HAP-1 (cell line): ENCODE measurements at regions of chr2 and their contacts with region 1.

Region 1: DNA sequence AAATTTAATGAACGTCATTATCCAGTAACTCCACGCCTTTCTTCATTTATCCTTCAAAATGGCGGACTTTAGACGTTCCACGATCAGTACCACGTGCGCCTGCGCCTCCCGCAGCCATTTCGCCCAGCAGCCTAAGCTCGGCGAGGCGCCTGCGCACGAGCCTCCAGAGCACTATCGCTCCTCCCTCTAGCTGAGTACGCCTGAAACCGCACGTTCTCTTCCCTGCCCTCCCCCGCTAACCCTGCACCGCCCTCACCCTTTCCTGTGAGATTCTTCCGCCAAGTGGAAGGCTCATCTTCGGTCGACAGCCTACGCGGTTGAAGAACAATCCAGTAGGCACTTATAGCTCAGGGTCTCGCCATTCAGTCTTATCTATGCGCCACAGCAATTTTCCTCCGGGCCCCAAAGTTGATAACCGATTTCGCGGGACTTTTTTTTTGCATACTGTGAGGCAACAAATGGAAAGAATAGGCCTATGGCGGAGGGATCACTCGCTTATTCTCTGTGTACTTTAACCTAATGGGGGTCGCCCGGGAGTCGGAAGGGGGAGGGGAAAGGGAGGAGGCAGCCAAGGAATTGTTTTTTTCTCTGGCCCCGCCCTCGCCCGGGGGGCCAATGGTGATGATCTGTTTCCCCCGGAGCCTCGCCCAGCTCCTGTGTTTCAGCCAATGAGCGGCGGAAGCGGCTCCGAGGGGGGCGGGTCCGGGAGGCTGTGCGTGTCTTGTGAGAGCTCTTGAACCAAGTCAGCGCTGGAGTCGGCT is at the start of gene KDM3A:
- DNase-seq: peak; percentile 97 to 100
- H3K4me3 ChIP-seq: peak within 1 kb of the TSS; percentile 45
- H3K4me1 ChIP-seq: peaks cover 8% of the 10 kb centered on the region
- H3K27me3 ChIP-seq: no peaks in the 10 kb centered on the region

Region 2: GRCh38 chr2:86195055-86195807 is 245.6 kb before region 1 on chr2 and contains the start of gene IMMT:
- in situ Hi-C with region 1: loop called (anchors 10 kb)
- DNase-seq: peak; percentile 96 to 97
- H3K4me3 ChIP-seq: peak within 1 kb of the TSS; percentile 98
- H3K4me1 ChIP-seq: peaks cover 10% of the 10 kb centered on the region
- H3K27me3 ChIP-seq: no peaks in the 10 kb centered on the region

Region 3: DNA sequence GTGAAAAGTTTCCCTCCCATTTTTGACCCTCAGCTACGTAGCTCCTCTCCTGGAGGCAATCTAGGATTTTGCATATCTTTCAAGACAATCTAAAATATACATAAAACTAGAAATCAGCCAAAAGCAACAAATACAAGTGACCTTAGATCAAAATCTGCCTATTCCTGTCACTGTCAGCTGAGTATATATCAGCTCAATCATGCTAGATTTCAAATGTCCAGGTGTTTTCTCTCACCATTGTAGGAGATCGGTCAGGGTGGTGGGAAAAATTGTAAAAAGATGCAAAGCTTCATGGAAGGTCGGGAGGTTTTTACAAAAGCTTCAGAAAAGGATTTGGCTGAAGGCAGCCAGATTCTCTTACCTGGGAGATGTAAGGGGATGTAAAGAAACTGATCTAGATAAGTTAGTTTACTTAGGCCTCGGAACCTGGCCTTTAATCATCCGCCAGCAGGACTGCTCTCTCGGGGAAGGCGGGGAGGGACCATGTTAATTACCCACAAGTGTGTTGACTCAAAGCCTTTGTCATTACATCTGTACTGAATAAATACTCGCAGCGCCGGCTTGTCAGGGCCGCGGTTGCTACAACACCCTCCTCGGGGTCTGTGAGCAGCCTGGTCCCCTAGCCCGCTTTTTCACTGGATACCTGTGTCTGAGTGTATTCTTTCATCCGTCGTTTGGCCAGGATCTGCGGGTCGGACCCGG is 115.5 kb after region 1 on chr2:
- in situ Hi-C with region 1: no loop called
- DNase-seq: peak in 1 of 2 experiments; percentile 32
- H3K4me3 ChIP-seq: no peak overlapping the region
- H3K4me1 ChIP-seq: peaks cover 5% of the 10 kb centered on the region; the same call in 1 of the 2 replicates
- H3K27me3 ChIP-seq: no peaks in the 10 kb centered on the region